ENCODE measurements at regions of chr22 and their contacts with region 1.

Region 1: DNA sequence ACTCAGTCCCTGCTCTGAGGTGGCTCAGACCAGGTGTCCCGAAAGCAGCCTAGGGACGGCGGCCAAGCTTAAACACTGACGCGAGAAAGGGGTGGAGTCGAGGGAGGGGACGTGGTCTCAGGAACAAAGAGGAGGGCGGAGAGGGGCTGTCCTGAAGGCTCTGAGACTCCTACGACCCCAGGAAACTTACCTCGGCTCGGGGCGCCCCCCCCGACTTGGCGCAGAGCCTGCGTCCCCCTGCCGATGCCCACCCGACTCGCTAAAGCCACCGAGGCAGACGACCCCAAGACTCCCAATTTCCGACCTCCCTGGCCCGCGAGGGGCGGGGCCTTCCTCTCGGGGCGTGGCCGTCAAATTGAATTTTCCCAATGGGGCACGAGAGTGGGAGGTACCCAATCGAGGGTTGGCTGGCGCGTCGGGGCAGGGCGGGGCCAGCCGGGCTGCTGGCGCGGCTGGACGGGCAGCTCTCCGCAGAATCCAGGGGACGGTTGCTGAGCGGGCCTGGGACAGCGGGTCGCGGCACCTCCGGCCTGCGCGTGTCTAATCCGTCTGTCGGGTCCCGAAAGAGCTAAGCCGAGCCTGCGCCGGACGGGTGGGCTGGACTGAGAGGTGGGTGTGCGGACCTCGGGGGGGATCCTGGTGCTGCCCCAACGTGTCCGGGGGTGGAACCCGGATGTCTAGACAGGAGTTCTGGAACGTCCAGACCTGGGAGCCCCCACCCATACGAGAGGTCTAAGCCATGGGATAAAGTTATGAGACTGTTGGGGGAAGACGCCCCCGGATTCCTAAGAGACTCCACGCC is at the start of gene SMTN:
- DNase-seq: peak; percentile 82 to 86 (median 84)
- H3K4me3 ChIP-seq: peak within 1 kb of the TSS; percentile 0 to 71
- H3K4me3 Mint-ChIP-seq: peak within 1 kb of the TSS; percentile 85 to 92 (median 90)
- H3K27ac ChIP-seq: peak within 1 kb of the TSS; percentile 25
- H3K27ac Mint-ChIP-seq: peak within 1 kb of the TSS; percentile 52 to 87 (median 73)
- H3K4me1 ChIP-seq: peaks cover 43% of the 10 kb centered on the region
- H3K4me1 Mint-ChIP-seq: peaks cover 18 to 40% (median 28%) of the 10 kb centered on the region in 4 donors
- H3K27me3 ChIP-seq: no peaks in the 10 kb centered on the region
- H3K27me3 Mint-ChIP-seq: no peaks in the 10 kb centered on the region
- total RNA-seq, gene SMTN: 1.6 to 1.7 TPM

Region 2: DNA sequence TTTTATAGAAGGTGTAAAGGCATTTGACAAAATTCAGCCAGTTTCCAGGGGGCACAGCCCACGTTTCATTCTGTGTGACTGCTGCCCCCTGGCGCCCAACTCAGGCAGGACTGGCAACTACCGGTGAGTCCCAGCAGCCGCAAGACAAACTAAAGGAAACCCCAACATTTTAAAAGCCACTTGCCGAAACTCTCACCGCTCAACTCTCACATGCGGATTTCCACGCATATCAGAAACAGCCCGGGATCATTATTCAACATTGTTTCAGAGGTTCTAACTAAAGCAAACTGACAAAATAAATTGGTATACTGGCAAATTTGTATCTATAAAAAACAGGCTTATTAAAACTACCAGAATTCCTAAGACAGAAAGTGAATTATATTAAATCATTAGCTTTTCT is 160.6 kb before region 1 on chr22:
- CTCF ChIA-PET with region 1: interaction called, 42 read pairs
- POLR2A ChIA-PET with region 1: interaction called, 27 read pairs
- intact Hi-C with region 1: loop called (anchors 1 kb)
- DNase-seq: peak; percentile 71 to 78 (median 77)
- H3K4me3 ChIP-seq: no peak overlapping the region
- H3K4me3 Mint-ChIP-seq: peak overlapping the region; percentile 69 to 86 (median 76)
- H3K27ac ChIP-seq: no peak overlapping the region
- H3K27ac Mint-ChIP-seq: peak overlapping the region in 5 of 7 donors; percentile 5 to 80 (median 73)
- H3K4me1 ChIP-seq: peaks cover 23% of the 10 kb centered on the region
- H3K4me1 Mint-ChIP-seq: peaks cover 7 to 20% (median 14%) of the 10 kb centered on the region in 4 donors
- H3K27me3 ChIP-seq: no peaks in the 10 kb centered on the region
- H3K27me3 Mint-ChIP-seq: no peaks in the 10 kb centered on the region

Region 3: DNA sequence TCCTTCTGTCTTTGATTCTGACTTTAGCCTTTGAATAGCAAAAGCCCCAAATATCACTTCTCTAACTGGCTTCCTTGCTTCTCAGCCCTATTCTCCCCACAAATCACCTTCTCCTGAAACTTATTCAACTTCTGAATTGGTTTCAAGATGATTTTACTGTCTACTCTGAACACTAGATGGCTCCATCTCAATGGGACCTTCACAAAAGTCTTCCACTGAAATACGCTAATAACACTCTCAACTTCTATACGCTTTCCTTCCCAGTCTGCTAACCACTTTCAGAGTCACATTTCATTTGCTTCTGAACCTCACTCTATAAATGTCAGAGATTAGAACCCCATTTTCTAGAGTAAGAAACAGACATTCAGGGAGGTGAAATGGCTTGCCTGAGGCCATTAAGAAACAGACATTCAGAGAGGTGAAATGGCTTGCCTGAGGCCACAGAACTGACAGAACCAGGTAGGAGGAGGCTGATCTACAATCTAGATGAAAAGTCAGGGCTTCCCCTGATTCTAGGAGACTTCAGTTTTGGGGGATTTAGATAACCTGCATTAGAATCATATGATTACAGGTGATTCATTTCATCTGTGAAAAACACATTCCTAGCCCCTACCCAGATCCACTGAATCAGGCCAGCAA is 133.1 kb before region 1 on chr22:
- CTCF ChIA-PET with region 1: interaction called, 54 read pairs
- POLR2A ChIA-PET with region 1: interaction called, 12 read pairs
- intact Hi-C with region 1: loop called (anchors 1 kb)
- DNase-seq: peak in 4 of 5 donors; percentile 34 to 46 (median 39)
- H3K4me3 ChIP-seq: no peak overlapping the region
- H3K4me3 Mint-ChIP-seq: no peak overlapping the region
- H3K27ac ChIP-seq: no peak overlapping the region
- H3K27ac Mint-ChIP-seq: no peak overlapping the region
- H3K4me1 ChIP-seq: peaks cover 33% of the 10 kb centered on the region
- H3K4me1 Mint-ChIP-seq: peaks cover 31 to 50% (median 45%) of the 10 kb centered on the region in 4 donors
- H3K27me3 ChIP-seq: no peaks in the 10 kb centered on the region
- H3K27me3 Mint-ChIP-seq: no peaks in the 10 kb centered on the region

Region 4: GRCh38 chr22:31046539-31047226 is 34.4 kb before region 1 on chr22:
- CTCF ChIA-PET with region 1: no interaction called
- POLR2A ChIA-PET with region 1: no interaction called
- intact Hi-C with region 1: no loop called
- DNase-seq: no peak
- H3K4me3 ChIP-seq: no peak overlapping the region
- H3K4me3 Mint-ChIP-seq: no peak overlapping the region
- H3K27ac ChIP-seq: no peak overlapping the region
- H3K27ac Mint-ChIP-seq: no peak overlapping the region
- H3K4me1 ChIP-seq: no peaks in the 10 kb centered on the region
- H3K4me1 Mint-ChIP-seq: no peaks in the 10 kb centered on the region
- H3K27me3 ChIP-seq: no peaks in the 10 kb centered on the region
- H3K27me3 Mint-ChIP-seq: peaks cover 6 to 15% of the 10 kb centered on the region in 2 donors

Region 5: DNA sequence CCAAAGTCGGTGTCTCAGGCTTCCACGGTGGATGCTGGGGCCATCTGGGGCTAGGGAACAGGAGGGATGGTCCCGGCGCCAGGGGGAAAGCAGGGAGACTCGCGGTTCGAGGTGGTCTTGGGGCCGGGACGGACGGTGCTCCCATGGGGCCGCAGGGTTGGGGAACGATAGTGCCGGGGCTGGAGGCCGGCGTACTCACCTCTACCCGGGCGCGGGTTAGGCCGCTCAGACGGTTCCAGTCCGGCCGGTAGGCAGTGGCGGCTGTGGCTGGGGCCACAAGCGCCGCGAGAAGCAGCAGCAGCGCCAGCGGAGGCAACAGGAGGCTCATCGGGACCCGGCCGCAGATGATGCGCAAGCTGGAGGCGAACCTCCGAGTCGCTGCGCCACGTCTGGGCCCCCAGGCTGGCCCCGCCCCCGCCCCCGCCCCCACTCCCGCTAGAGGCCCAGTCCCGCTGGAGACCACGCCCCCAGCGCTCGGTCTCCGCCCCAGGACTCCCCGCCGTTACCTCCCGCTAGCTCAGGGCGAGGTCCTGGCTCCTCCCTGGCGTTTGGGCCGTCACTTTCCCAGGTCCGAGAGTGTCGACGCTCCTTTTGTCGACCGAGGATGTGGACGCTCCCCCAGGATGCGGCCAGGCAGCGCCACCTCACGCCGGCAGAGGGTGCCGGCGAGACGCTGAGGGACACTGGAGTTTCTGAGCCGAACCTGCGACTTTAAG is 26.3 kb after region 1 on chr22 and contains the start of gene SELENOM:
- CTCF ChIA-PET with region 1: interaction called, 5 read pairs
- POLR2A ChIA-PET with region 1: interaction called, 18 read pairs
- intact Hi-C with region 1: loop called (anchors 1 kb)
- DNase-seq: peak; percentile 84 to 90 (median 85)
- H3K4me3 ChIP-seq: peak within 1 kb of the TSS; percentile 80 to 97
- H3K4me3 Mint-ChIP-seq: peak within 1 kb of the TSS; percentile 89 to 97 (median 94)
- H3K27ac ChIP-seq: peak within 1 kb of the TSS; percentile 62
- H3K27ac Mint-ChIP-seq: peak within 1 kb of the TSS; percentile 86 to 96 (median 94)
- H3K4me1 ChIP-seq: peaks cover 20% of the 10 kb centered on the region
- H3K4me1 Mint-ChIP-seq: peaks cover 17 to 31% (median 24%) of the 10 kb centered on the region in 4 donors
- H3K27me3 ChIP-seq: no peaks in the 10 kb centered on the region
- H3K27me3 Mint-ChIP-seq: no peaks in the 10 kb centered on the region
- total RNA-seq, gene SELENOM: 64.2 to 68.6 TPM

Region 6: DNA sequence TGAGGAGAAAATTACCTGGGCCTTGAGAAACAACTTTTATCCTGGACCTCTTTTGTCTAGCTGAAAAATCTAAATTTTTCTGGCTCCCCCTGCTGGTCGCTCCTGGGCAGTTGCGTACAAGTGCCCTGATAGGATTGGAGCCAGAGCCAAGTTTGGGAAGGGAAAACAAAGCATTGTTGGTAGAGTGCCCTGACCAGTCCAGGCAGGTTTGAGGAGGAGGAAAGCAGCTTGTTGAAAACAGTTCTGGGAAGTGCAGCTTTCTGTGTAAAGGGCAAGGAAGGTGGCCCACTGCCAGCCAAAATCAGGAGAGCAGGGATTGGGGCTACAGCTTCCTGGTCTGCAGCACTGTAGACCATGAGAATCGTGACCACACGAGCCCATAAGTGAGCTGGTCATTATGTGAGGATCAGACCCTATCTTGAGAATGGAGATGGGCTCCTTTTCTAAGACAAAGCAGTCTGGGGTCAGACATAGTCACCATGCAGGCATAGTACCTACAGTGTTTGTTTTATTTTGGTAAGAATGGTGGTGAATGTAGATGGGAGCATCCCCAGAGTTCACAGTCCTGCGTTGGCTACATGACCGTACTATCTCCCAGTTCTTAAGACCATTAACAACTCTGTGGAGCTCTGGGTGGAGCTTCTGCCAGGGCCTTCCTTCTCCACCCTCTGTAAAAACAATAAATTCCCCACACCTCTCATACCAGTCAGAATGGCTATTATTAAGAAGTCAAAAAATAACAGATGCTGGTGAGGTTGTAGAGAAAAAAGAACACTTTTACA is 232.5 kb after region 1 on chr22:
- CTCF ChIA-PET with region 1: no interaction called
- POLR2A ChIA-PET with region 1: no interaction called
- intact Hi-C with region 1: loop called (anchors 5 kb)
- DNase-seq: peak; percentile 58 to 68 (median 60)
- H3K4me3 ChIP-seq: no peak overlapping the region
- H3K4me3 Mint-ChIP-seq: peak overlapping the region in 1 of 8 donors; percentile 10
- H3K27ac ChIP-seq: no peak overlapping the region
- H3K27ac Mint-ChIP-seq: peak overlapping the region in 5 of 7 donors; percentile 37 to 91 (median 78)
- H3K4me1 ChIP-seq: peaks cover 25% of the 10 kb centered on the region
- H3K4me1 Mint-ChIP-seq: peaks cover 6 to 20% (median 14%) of the 10 kb centered on the region in 4 donors
- H3K27me3 ChIP-seq: no peaks in the 10 kb centered on the region
- H3K27me3 Mint-ChIP-seq: no peaks in the 10 kb centered on the region

Measured in CD4-positive, alpha-beta memory T cell (primary cell).